ENCODE measurements at regions of chr16 and their contacts with region 1.

Region 1: GRCh38 chr16:6059671-6060070 is 962.1 kb upstream of the EEF2KMT start:
- DNase-seq: no peak
- H3K4me3 Mint-ChIP-seq: no peak overlapping the region
- H3K27ac Mint-ChIP-seq: no peak overlapping the region
- H3K4me1 Mint-ChIP-seq: no peaks in the 10 kb centered on the region
- H3K27me3 Mint-ChIP-seq: peaks cover 26% of the 10 kb centered on the region
- CTCF ChIP-seq: no peak

Region 2: GRCh38 chr16:6032438-6032837 is 27.2 kb before region 1 on chr16:
- CTCF ChIA-PET with region 1: interaction called, 10 read pairs
- intact Hi-C with region 1: no loop called
- DNase-seq: no peak
- H3K4me3 Mint-ChIP-seq: no peak overlapping the region
- H3K27ac Mint-ChIP-seq: no peak overlapping the region
- H3K4me1 Mint-ChIP-seq: no peaks in the 10 kb centered on the region
- H3K27me3 Mint-ChIP-seq: peaks cover 43% of the 10 kb centered on the region
- CTCF ChIP-seq: no peak